ENCODE measurements at regions of chr1 and their contacts with region 1.

Region 1: DNA sequence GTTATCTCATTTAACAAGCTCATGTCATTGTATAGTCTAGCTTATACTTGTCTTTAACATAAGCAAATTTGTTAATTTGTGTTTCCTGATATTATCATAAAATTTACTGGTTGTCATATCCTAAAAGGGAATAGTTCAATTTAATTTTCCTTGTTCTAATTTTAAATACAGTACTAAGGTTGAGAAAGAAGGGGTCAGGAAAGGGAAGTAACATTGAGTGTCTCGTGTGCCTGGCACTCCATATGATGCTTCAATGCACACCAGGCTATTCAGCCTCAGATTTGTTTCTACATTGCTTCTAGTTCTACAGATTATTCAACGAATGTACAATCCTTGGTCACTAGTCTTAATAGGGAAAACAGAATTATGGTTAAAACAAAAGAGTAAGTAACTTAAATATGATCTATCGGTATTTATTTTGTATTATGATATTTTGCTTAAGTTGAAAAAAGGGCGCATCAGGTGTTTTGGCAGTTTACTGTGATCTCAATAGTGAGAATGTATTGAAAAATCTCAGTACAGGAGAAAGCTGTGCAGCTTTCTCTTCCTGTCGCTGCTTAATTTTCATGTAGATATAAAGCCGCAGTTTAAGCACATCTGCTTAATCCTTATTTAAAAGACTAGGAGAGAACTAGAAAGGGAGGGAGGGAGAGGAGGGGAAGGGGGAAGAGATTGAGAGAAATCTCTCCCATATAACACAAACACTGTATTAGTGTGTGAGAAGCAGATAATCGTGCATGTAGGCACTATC is 13.0 kb downstream of the PTPRC start:
- DNase-seq: no peak
- H3K4me3 Mint-ChIP-seq: peak overlapping the region; percentile 72
- H3K27ac Mint-ChIP-seq: peak overlapping the region; percentile 97
- H3K4me1 Mint-ChIP-seq: peaks cover 69% of the 10 kb centered on the region
- H3K27me3 Mint-ChIP-seq: no peaks in the 10 kb centered on the region

Region 2: GRCh38 chr1:197622371-197622770 is 1029.5 kb before region 1 on chr1:
- CTCF ChIA-PET with region 1: no interaction called
- POLR2A ChIA-PET with region 1: no interaction called
- intact Hi-C with region 1: no loop called
- DNase-seq: no peak
- H3K4me3 Mint-ChIP-seq: no peak overlapping the region
- H3K27ac Mint-ChIP-seq: no peak overlapping the region
- H3K4me1 Mint-ChIP-seq: peaks cover 1% of the 10 kb centered on the region
- H3K27me3 Mint-ChIP-seq: no peaks in the 10 kb centered on the region

Region 3: DNA sequence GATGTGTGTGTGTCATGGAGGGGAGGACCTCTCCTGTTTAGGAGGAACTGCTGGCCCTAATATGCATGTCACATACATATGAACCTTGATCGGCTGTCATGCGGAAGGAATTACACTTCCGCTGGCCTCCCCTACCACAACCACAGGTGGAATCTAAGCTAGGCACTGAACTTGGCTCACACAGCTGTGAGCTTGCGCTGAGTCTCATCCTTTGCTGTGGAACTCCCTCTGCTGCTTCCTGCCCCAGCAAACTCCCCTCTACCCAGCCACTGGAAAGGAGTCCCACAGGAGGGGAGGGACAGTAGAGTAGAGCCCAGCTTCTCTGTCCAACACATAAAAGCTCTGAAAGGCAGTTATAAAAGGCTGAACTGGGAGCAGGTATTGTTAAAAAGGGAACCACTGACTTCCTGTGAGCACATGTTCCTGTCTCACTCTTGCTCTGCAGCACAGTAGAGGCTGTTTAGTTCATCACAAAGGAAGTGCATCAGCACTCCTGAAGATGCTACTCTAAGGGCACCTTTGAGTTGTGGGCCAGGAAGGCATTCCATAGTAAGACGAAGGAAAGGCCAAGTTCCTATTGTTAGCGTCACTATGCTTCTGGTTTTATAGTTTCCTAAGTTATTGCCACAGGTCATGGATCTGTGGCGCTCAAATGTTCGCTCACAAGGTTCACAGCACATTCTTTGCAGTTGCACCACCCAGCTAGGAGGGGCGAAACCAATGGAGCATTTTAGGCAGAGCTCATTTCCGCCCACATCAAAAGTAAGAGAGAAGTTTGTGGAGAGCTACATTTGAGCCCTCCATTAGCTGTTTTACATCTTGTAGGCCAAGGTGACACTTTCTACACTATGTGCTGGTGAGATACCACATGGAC is 30.6 kb before region 1 on chr1:
- CTCF ChIA-PET with region 1: interaction called, 9 read pairs
- POLR2A ChIA-PET with region 1: interaction called, 14 read pairs
- intact Hi-C with region 1: loop called (anchors 2 kb)
- DNase-seq: peak; percentile 84
- H3K4me3 Mint-ChIP-seq: peak overlapping the region; percentile 74
- H3K27ac Mint-ChIP-seq: peak overlapping the region; percentile 94
- H3K4me1 Mint-ChIP-seq: peaks cover 87% of the 10 kb centered on the region
- H3K27me3 Mint-ChIP-seq: no peaks in the 10 kb centered on the region

Region 4: DNA sequence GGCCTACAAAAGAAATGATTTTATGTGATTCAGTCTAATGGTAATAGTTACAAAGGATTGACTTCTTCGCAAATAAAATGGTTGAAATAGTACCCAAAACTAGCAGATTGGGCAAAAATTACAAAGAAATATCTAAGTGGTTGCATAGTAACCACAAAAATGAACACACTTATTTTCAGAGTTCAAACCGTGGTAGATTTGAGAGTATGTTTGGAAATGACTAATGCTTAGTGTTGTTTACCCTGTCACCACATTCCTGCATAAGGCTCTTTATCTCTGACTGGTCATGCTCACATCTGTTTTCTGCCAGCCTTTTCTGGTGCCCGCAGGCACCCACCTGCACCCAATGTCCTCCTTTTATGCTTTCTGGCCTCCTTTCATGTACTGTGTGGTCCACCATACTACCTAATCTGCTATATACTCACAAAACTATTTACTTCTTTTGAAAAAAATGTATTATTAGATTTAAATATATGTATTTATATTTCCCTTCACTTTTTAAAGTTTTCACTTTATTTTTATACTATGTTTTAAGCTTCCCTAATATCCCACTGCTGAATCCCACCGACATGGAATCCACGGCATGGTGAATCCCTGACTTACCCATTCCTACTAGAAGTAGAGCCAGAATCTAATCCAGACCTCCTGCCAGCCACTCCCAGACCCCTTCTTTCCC is 17.3 kb after region 1 on chr1:
- CTCF ChIA-PET with region 1: interaction called, 6 read pairs
- POLR2A ChIA-PET with region 1: interaction called, 34 read pairs
- intact Hi-C with region 1: loop called (anchors 1 kb)
- DNase-seq: peak; percentile 65
- H3K4me3 Mint-ChIP-seq: peak overlapping the region; percentile 63
- H3K27ac Mint-ChIP-seq: peak overlapping the region; percentile 96
- H3K4me1 Mint-ChIP-seq: peaks cover 92% of the 10 kb centered on the region
- H3K27me3 Mint-ChIP-seq: no peaks in the 10 kb centered on the region

Region 5: GRCh38 chr1:198729195-198729863 is 77.5 kb after region 1 on chr1:
- CTCF ChIA-PET with region 1: no interaction called
- POLR2A ChIA-PET with region 1: no interaction called
- intact Hi-C with region 1: no loop called
- DNase-seq: no peak
- H3K4me3 Mint-ChIP-seq: no peak overlapping the region
- H3K27ac Mint-ChIP-seq: peak overlapping the region; percentile 50
- H3K4me1 Mint-ChIP-seq: peaks cover 61% of the 10 kb centered on the region
- H3K27me3 Mint-ChIP-seq: no peaks in the 10 kb centered on the region